OCI-LY7 (cell line): ENCODE measurements at regions of chr18 and their contacts with region 1.

Region 1: GRCh38 chr18:54223568-54224241 is 764 bp downstream of the MBD2 start:
- DNase-seq: peak; percentile 48
- H3K4me3 ChIP-seq: peak overlapping the region; percentile 88
- H3K27ac ChIP-seq: peak overlapping the region; percentile 99
- H3K4me1 ChIP-seq: peaks cover 41% of the 10 kb centered on the region
- CTCF ChIP-seq: 0 out of 2 replicates have a peak, but pooled peaks have one; percentile 3

Region 2: GRCh38 chr18:54209471-54210180 is 14.1 kb before region 1 on chr18:
- CTCF ChIA-PET with region 1: no interaction called
- POLR2A ChIA-PET with region 1: interaction called, 53 read pairs
- intact Hi-C with region 1: loop called (anchors 1 kb)
- DNase-seq: peak; percentile 32
- H3K4me3 ChIP-seq: peak overlapping the region; percentile 63
- H3K27ac ChIP-seq: peak overlapping the region; percentile 98
- H3K4me1 ChIP-seq: peaks cover 92% of the 10 kb centered on the region
- CTCF ChIP-seq: no peak

Region 3: GRCh38 chr18:54263904-54264371 is 40.2 kb after region 1 on chr18:
- CTCF ChIA-PET with region 1: interaction called, 3 read pairs
- POLR2A ChIA-PET with region 1: interaction called, 21 read pairs
- intact Hi-C with region 1: loop called (anchors 1 kb)
- DNase-seq: peak; percentile 30
- H3K4me3 ChIP-seq: peak overlapping the region; percentile 30
- H3K27ac ChIP-seq: peak overlapping the region; percentile 55
- H3K4me1 ChIP-seq: peaks cover 63% of the 10 kb centered on the region
- CTCF ChIP-seq: no peak

Region 4: DNA sequence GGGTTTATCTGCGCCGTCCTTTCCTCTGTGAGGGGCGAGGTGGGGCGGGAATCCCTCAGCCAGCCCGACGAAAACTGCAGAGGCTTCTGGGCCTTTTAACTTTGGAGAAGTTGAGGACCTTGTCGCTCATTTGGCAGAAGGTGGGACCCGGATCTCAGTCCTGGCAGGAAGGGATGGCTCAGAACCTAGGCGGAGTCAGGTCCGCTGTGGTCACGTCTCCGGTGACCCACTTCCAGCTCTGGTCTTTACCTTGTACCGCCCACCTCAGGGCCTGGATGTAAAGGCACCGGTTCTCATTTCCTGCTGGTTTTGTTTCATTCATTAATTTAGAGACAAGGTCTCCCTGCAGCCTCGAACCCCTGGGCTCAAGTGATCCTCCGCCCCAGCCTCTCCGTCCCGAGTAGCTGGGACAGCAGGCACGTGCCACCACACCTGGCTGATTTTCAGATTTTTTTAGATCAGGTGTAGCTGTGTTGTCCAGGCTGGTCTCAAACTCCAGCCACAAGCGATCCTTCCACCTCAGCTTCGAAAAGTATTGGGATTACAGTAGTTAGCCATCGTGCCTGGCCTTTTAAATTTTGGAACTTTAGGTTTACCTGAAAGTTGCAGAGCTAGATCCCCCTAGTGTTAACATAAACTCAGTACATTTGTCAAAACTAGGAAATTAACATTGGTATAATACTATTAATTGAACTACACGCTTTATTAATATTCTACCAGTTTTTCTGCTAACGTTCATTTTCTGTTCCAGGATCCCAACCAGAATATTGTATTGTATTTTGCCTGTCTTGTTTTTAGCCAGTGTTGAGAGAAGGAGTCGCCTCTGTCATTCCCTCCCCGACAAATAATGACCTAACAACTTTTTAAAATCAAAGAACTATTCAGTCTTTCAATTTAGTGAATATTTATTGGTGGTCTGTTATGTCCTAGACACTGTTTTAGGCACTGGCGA is 46.5 kb after region 1 on chr18:
- CTCF ChIA-PET with region 1: interaction called, 3 read pairs
- POLR2A ChIA-PET with region 1: interaction called, 21 read pairs
- intact Hi-C with region 1: loop called (anchors 1 kb)
- DNase-seq: peak; percentile 56
- H3K4me3 ChIP-seq: peak overlapping the region; percentile 75
- H3K27ac ChIP-seq: peak overlapping the region; percentile 91
- H3K4me1 ChIP-seq: peaks cover 44% of the 10 kb centered on the region
- CTCF ChIP-seq: peak; percentile 74

Region 5: DNA sequence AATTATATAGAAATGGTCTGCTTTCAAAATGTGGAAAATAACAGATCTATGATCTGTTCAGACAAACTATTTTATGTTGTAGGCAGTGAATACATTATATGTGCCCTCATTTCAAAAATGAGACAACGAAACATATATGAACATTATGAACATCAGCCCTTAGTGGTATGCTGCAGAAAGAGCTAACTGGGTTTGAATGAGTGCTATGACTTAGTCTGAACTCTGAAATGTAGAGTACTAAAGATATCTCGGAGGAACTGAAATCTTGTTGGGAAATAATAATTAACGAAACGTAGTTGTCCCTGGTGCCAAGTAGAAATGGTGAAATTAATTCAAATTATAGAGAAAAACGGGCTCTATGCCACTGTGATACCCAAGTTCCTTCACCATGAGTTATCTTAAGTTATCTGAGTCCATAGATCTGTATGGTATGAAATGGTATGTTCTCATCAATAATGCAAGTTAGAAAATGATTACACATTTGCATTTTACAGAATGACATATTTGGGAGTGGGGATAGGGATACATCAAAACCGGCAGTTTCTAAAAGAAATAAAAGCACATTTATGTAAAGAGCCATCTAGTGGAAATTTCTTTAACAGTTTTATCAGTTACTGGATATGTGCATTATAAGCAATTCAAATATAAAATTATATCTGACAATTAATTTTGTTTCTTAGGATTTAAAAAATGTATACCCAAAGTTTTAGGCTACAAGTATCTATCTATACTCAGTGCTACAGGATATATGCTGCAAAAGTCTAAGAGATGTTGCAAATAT is 107.3 kb after region 1 on chr18:
- CTCF ChIA-PET with region 1: no interaction called
- POLR2A ChIA-PET with region 1: no interaction called
- intact Hi-C with region 1: loop called (anchors 2 kb)
- DNase-seq: peak; percentile 4
- H3K4me3 ChIP-seq: no peak overlapping the region
- H3K27ac ChIP-seq: no peak overlapping the region
- H3K4me1 ChIP-seq: no peaks in the 10 kb centered on the region
- CTCF ChIP-seq: peak; percentile 68

Region 6: GRCh38 chr18:54357660-54358494 is 134.2 kb after region 1 on chr18 and contains the starts of genes C18orf54 and STARD6:
- CTCF ChIA-PET with region 1: interaction called, 3 read pairs
- POLR2A ChIA-PET with region 1: interaction called, 10 read pairs
- intact Hi-C with region 1: loop called (anchors 2 kb)
- DNase-seq: peak; percentile 88
- H3K4me3 ChIP-seq: peak within 1 kb of the TSS; percentile 88
- H3K27ac ChIP-seq: peak within 1 kb of the TSS; percentile 82
- H3K4me1 ChIP-seq: peaks cover 21% of the 10 kb centered on the region
- CTCF ChIP-seq: peak; percentile 65
- total RNA-seq, gene C18orf54: 4.9 and 5.4 TPM in 2 replicates
- total RNA-seq, gene STARD6: not detected in 2 replicates